Activated CD4-positive, alpha-beta T cell treated with anti-CD3 and anti-CD28 coated beads for 36 hours (primary cell): ENCODE measurements at regions of chr5 and their contacts with region 1.

Region 1: GRCh38 chr5:139262742-139263445 is 30.6 kb upstream of the MATR3 start:
- DNase-seq: peak; percentile 87
- ATAC-seq: peak; percentile 100
- H3K4me3 Mint-ChIP-seq: no peak overlapping the region
- H3K27ac Mint-ChIP-seq: no peak overlapping the region
- H3K4me1 Mint-ChIP-seq: peaks cover 4% of the 10 kb centered on the region
- H3K27me3 Mint-ChIP-seq: peaks cover 3% of the 10 kb centered on the region

Region 2: DNA sequence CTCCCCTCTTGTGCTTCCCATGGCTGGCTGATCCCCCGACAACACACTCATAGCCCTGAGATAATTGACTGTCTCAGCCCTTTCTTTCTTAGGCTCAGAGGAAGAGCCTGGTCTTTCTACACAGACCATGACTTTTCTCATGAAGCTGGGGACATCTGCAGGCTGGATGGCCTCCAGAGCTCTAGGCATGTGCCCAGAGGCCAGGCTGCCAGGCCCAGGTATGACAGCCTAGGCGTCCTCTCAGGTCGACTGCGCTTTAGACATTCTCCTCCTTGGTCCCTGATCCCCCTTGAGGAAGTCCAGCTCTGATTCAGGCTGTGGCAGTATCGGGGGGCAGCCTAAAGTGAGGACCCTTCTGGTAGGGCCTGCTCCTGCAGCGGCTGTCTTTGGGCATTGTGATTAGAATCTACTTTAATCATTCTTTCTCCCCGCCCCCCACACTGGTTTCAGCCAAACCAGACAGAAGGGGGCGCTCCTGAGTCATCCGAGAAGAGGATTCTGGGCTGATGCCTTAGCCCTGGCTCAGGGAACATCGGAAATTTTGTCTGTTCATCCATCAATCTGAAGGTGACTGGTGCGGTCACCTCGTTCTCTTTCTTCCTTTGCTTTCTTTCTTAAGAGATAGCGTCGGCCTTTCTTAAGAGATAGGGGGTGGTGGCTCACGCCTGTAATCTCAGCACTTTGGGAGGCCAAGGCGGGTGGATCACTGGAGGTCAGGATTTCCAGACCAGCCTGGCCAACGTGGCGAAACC is 621.2 kb before region 1 on chr5:
- CTCF ChIA-PET with region 1: interaction called, 3 read pairs
- POLR2A ChIA-PET with region 1: no interaction called
- intact Hi-C with region 1: loop called (anchors 1 to 5 kb)
- DNase-seq: peak; percentile 92
- ATAC-seq: peak; percentile 92
- H3K4me3 Mint-ChIP-seq: no peak overlapping the region
- H3K27ac Mint-ChIP-seq: no peak overlapping the region
- H3K4me1 Mint-ChIP-seq: peaks cover 2% of the 10 kb centered on the region
- H3K27me3 Mint-ChIP-seq: peaks cover 63% of the 10 kb centered on the region

Region 3: DNA sequence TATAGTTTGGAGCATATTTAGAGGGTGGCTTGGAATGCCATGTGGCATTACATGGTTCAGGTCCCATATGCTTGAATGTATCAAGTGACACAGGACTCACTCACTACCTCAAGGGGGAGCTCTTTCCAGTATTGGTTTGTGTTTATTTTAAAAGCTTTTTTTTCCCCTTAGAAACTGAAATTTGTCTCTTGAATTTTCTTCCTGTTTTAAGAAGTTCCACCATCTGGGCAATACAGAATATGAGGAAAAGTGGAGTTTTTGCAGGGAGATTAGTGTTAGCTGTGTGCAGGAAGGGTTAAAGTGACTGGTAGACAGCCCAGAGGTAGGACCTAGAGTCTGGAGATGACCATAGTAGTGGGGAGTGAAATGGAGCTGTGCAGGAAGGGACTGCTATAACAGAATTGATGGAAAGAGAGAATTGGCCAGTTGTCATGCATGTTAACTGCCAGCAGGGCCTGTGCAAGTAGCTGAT is 473.1 kb before region 1 on chr5:
- CTCF ChIA-PET with region 1: interaction called, 3 read pairs
- POLR2A ChIA-PET with region 1: no interaction called
- intact Hi-C with region 1: loop called in 1 of 2 experiments (anchors 2 kb)
- DNase-seq: peak; percentile 10
- ATAC-seq: no peak
- H3K4me3 Mint-ChIP-seq: no peak overlapping the region
- H3K27ac Mint-ChIP-seq: no peak overlapping the region
- H3K4me1 Mint-ChIP-seq: peaks cover 21% of the 10 kb centered on the region
- H3K27me3 Mint-ChIP-seq: peaks cover 47% of the 10 kb centered on the region

Region 4: DNA sequence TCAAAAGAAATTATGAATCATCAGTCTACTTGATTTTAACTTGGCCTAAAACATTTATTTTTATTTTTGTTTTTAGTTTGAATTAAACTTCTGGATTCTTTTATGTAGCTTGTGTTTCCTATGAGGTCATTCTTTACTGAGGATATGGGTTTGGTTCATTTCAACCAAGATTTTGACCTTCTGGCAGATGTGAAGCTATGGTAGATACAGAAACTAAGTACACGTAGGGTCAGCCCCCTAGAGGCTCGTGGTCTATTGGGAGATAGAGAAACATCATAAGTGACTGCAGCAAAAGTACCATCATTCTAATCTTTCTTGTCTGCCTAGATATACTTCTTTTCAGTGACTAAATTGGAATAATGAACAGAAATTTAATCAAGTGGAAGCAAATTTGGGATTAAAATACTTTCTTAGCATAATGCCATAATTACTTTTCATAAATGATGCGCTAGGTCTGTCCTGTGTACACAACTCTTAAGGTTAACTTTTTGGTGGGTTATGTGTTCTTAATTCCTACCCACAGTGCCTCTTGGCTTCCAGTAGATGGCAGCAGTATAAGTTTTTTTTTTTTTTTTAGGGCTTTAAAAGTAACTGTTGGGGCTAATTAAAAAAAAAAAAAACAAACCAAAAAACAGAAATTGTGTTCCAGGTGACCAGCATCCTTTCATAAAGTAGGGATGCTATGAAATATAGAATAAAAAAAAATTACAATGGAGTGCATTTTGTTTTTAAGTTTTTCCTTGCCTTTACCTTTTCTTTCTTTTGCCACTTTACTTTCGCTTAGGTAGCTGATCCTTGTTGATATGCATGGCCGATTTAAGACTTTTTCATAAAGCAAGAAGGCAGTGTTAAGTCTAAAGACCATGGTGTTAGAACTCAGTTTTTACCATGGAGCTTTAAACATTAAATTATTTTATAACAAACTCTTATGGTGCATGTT is 437.7 kb before region 1 on chr5:
- CTCF ChIA-PET with region 1: no interaction called
- POLR2A ChIA-PET with region 1: no interaction called
- intact Hi-C with region 1: loop called (anchors 1 to 2 kb)
- DNase-seq: peak; percentile 8
- ATAC-seq: peak; percentile 74
- H3K4me3 Mint-ChIP-seq: no peak overlapping the region
- H3K27ac Mint-ChIP-seq: no peak overlapping the region
- H3K4me1 Mint-ChIP-seq: peaks cover 4% of the 10 kb centered on the region
- H3K27me3 Mint-ChIP-seq: peaks cover 6% of the 10 kb centered on the region

Region 5: GRCh38 chr5:139091439-139092156 is 171.3 kb before region 1 on chr5:
- CTCF ChIA-PET with region 1: interaction called, 3 read pairs
- POLR2A ChIA-PET with region 1: no interaction called
- intact Hi-C with region 1: loop called in 1 of 2 experiments (anchors 5 kb)
- DNase-seq: no peak
- ATAC-seq: no peak
- H3K4me3 Mint-ChIP-seq: no peak overlapping the region
- H3K27ac Mint-ChIP-seq: no peak overlapping the region
- H3K4me1 Mint-ChIP-seq: peaks cover 14% of the 10 kb centered on the region
- H3K27me3 Mint-ChIP-seq: no peaks in the 10 kb centered on the region